Endothelial cell of umbilical vein (primary cell): ENCODE measurements at regions of chr19 and their contacts with region 1.

Region 1: DNA sequence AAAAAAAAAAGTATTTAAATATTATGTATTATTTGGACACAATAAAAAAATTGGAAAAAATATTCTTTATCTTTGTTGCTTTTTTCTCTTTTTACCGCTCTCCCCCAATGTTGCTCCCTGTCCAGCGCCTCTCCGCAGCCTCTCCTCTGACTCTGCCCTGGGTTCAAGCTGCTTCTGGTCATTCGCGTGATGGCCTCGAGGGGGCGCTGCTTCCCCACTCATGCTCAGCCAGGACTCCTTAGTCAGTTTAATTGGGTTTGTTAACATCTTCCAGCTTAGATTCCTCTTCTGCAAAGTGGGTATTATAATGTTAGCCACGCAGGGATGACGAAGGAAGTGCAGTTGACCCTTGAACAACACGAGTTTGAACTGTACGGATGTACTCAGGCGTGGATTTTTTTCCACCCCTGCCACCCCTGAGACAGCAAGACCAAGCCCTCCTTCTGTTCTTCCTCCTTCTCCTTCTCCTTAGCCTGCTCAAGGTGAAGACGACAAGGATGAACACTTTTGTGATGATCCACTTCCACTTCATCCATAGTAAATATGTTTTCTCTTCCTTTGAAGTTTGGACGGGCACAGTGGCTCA is 4.9 kb upstream of the NWD1 start:
- DNase-seq: peak; percentile 66
- H3K4me3 ChIP-seq: no peak overlapping the region
- H3K27ac ChIP-seq: no peak overlapping the region
- H3K4me1 ChIP-seq: no peaks in the 10 kb centered on the region
- H3K27me3 ChIP-seq: no peaks in the 10 kb centered on the region
- CTCF ChIP-seq: peak; percentile 87
- POLR2A ChIP-seq: no peak

Region 2: DNA sequence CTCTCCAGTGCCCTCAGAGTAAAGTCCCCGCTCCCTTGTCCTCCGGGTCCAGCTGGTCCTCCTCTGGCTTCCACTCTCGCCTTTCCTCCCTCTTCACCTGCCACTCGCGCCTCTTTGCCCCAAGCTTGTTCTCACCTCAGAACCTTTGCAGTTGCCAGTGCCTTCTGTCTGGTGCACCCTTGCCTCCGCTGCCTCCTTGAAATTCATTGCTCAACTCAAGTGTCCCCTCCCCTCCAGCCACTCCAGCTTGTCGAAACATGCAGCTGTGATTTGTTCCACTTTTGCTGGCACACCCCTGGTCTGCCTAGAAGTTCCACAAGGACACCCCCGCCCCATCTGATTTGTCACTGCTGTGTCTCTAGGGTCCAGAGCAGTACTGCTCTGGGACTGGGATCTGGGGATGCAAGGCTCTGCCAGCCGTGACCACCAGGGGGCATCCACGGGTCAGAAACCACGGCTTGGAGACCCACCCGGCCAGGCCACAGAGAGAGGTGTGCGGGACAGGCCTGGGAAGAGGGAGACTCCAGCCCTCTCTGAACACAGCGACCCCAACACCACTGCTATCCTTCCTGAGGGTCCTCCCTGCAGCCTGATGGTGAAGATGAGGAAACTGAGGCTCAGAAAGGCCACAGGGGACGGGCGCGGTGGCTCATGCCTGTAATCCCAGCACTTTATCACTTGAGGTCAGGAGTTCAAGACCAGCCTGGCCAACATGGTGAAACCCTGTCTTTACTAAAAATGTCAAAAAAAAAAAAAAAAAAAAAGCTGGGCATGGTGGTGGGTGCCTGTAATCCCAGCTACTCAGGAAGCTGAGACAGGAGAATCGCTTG is 467.2 kb before region 1 on chr19:
- CTCF ChIA-PET with region 1: no interaction called
- POLR2A ChIA-PET with region 1: no interaction called
- dilution Hi-C with region 1: no loop called
- intact Hi-C with region 1: no loop called
- DNase-seq: peak; percentile 78
- H3K4me3 ChIP-seq: no peak overlapping the region
- H3K27ac ChIP-seq: no peak overlapping the region
- H3K4me1 ChIP-seq: no peaks in the 10 kb centered on the region
- H3K27me3 ChIP-seq: no peaks in the 10 kb centered on the region
- CTCF ChIP-seq: peak; percentile 94 to 95
- POLR2A ChIP-seq: no peak

Region 3: GRCh38 chr19:16631465-16631864 is 83.3 kb before region 1 on chr19:
- CTCF ChIA-PET with region 1: no interaction called
- POLR2A ChIA-PET with region 1: no interaction called
- dilution Hi-C with region 1: no loop called
- intact Hi-C with region 1: no loop called
- DNase-seq: no peak
- H3K4me3 ChIP-seq: no peak overlapping the region
- H3K27ac ChIP-seq: no peak overlapping the region
- H3K4me1 ChIP-seq: peaks cover 13% of the 10 kb centered on the region
- H3K27me3 ChIP-seq: no peaks in the 10 kb centered on the region
- CTCF ChIP-seq: no peak
- POLR2A ChIP-seq: no peak

Region 4: GRCh38 chr19:16702118-16702517 is 12.7 kb before region 1 on chr19:
- CTCF ChIA-PET with region 1: interaction called, 12 read pairs
- POLR2A ChIA-PET with region 1: no interaction called
- dilution Hi-C with region 1: no loop called
- intact Hi-C with region 1: no loop called
- DNase-seq: no peak
- H3K4me3 ChIP-seq: no peak overlapping the region
- H3K27ac ChIP-seq: no peak overlapping the region
- H3K4me1 ChIP-seq: no peaks in the 10 kb centered on the region
- H3K27me3 ChIP-seq: no peaks in the 10 kb centered on the region
- CTCF ChIP-seq: no peak
- POLR2A ChIP-seq: no peak

Region 5: GRCh38 chr19:16737911-16738310 is 23.1 kb after region 1 on chr19:
- CTCF ChIA-PET with region 1: interaction called, 22 read pairs
- POLR2A ChIA-PET with region 1: interaction called, 5 read pairs
- dilution Hi-C with region 1: no loop called
- intact Hi-C with region 1: no loop called
- DNase-seq: no peak
- H3K4me3 ChIP-seq: no peak overlapping the region
- H3K27ac ChIP-seq: no peak overlapping the region
- H3K4me1 ChIP-seq: peaks cover 10% of the 10 kb centered on the region
- H3K27me3 ChIP-seq: no peaks in the 10 kb centered on the region
- CTCF ChIP-seq: no peak
- POLR2A ChIP-seq: no peak

Region 6: GRCh38 chr19:16771618-16772017 is 56.8 kb after region 1 on chr19:
- CTCF ChIA-PET with region 1: interaction called, 26 read pairs
- POLR2A ChIA-PET with region 1: no interaction called
- dilution Hi-C with region 1: no loop called
- intact Hi-C with region 1: loop called (anchors 2 kb)
- DNase-seq: peak; percentile 81
- H3K4me3 ChIP-seq: no peak overlapping the region
- H3K27ac ChIP-seq: no peak overlapping the region
- H3K4me1 ChIP-seq: no peaks in the 10 kb centered on the region
- H3K27me3 ChIP-seq: no peaks in the 10 kb centered on the region
- CTCF ChIP-seq: peak; percentile 73 to 79
- POLR2A ChIP-seq: no peak

Region 7: DNA sequence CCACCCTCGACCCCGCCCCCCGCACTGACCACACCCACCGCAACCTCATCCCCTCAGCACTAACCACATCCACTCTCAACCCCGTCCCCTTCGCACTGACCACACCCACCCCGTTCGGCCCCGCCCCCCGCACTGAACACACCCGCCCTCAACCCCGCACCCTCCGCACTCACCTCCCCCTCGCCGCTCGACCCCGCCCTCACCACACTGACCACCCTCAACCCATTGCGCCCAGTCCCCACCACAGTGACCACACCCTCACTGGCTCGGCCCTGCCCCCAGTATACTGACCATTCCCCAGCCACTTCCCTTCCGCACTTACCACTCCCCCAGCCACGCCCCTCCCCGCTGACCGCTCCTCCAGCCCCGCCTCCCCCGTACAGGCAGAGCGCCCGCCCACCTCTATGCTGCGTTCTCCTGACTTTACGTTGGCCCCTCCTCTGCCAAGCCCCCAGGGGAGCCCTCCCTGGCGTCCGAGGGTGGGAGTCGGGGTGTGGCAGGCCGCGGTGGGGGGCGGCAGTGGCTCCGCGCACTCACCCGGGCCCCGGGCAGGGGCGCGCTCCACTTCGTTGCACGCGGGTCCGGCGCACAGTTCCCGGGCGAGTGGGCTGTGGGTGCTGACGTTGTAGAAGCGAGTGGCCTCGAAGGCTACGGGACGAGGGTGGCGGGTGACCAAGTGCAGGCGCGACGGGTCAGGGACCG is 182.5 kb after region 1 on chr19:
- CTCF ChIA-PET with region 1: interaction called, 6 read pairs
- POLR2A ChIA-PET with region 1: no interaction called
- dilution Hi-C with region 1: no loop called
- intact Hi-C with region 1: loop called (anchors 1 kb)
- DNase-seq: peak; percentile 97
- H3K4me3 ChIP-seq: peak overlapping the region; percentile 50 to 60 (median 57)
- H3K27ac ChIP-seq: peak overlapping the region; percentile 39
- H3K4me1 ChIP-seq: no peaks in the 10 kb centered on the region
- H3K27me3 ChIP-seq: no peaks in the 10 kb centered on the region
- CTCF ChIP-seq: no peak
- POLR2A ChIP-seq: no peak